Activated T-helper 1 cell treated with anti-CD3 and anti-CD28 coated beads, Interleukin-12 subunit alpha, Interleukin-12 subunit beta, Interleukin-2, Interleukin-4 antibody, amounts not matched to agents 30 ng/mL and 10 ng/mL and 1 ng/mL, durations not matched to agents 14 hours and 24 hours and 36 hours (primary cell): ENCODE measurements at regions of chr11 and their contacts with region 1.

Region 1: DNA sequence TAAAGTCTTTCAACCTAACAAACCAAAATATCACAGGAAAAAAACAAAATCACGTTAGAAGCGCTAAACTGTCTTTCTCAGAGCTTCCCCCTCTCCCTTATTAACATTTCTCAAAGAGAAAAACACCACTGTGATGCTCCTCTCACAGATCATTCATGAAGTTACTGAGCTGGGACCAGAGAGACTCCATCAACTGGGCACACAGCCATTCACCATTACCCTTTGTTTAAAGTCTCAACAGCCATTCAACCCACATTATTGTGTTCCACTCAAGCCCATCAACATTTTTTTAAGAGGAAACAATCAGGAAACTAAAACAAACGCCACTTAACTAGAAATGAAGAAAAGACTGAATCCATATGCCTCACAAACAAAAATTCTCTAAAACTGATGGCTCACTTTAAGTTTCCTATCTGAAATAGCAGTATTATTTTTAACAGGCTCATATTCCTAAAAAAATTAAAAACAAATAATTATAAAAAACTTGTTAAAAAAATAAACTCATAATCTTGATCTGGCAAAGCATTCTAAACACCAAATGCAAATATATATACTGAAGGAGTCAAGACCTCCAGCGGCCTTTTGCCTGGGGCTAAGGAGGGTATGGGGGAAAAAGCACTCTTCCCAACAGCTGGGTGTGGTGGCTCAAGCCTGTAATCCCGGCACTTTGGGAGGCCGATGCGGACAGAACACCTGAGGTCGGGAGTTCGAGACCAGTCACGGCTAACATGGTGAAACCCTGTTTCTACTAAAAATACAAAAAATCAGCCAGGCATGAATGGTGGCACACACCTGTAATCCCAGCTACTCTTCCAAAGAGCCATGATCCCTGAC is 14.0 kb downstream of the CELF1 start:
- DNase-seq: no peak
- H3K4me3 Mint-ChIP-seq: no peak overlapping the region
- H3K27ac Mint-ChIP-seq: no peak overlapping the region
- H3K4me1 Mint-ChIP-seq: peaks cover 43% of the 10 kb centered on the region
- H3K27me3 Mint-ChIP-seq: no peaks in the 10 kb centered on the region

Region 2: GRCh38 chr11:47477323-47477722 is 61.6 kb before region 1 on chr11:
- intact Hi-C with region 1: no loop called
- DNase-seq: no peak
- H3K4me3 Mint-ChIP-seq: no peak overlapping the region
- H3K27ac Mint-ChIP-seq: peak overlapping the region; percentile 76
- H3K4me1 Mint-ChIP-seq: peaks cover 5% of the 10 kb centered on the region
- H3K27me3 Mint-ChIP-seq: no peaks in the 10 kb centered on the region

Region 3: GRCh38 chr11:47523468-47524225 is 15.3 kb before region 1 on chr11:
- intact Hi-C with region 1: loop called (anchors 2 kb)
- DNase-seq: peak; percentile 41
- H3K4me3 Mint-ChIP-seq: peak overlapping the region; percentile 54
- H3K27ac Mint-ChIP-seq: peak overlapping the region; percentile 89
- H3K4me1 Mint-ChIP-seq: peaks cover 50% of the 10 kb centered on the region
- H3K27me3 Mint-ChIP-seq: no peaks in the 10 kb centered on the region